Activated CD4-positive, alpha-beta memory T cell treated with anti-CD3 and anti-CD28 coated beads for 36 hours (primary cell): ENCODE measurements at regions of chr4 and their contacts with region 1.

Region 1: DNA sequence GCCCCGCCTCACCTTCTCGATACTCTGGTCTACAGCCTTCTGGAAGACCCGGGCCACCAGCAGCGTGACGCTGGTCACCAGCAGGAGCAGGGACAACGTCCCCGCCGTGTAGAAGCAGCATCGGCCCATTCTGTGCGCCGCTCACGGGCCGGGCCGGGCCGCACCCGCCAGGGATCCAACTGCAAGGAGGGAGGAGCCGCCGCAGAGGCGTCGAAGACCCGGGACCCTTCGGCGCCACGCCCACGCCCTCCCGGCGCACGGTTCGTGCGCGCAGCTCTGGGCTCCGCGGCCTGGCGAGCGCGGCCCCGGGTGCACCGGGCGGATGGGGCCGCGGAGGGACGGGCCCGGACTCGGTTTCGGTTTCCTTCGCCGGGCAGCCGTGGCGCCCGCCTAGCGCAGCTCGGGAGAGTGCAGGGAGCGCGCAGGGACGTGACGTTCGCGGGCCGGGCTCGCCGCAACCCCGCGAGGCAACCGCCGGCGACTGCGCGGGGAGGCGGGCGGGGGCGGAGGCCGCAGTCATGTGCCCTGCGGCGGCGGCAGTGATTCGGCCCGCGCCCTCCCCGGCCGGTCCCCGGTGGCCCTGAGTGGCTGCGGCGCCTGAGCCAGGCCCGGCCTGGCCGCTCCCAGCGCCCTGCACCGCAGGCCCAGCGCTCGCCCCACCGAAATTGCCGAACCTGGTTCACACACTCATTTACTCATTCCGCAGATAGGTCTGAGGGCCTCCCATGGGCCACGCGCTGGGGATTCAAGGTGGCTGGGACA is at the start of gene SCARB2:
- DNase-seq: peak; percentile 75
- H3K4me3 Mint-ChIP-seq: peak within 1 kb of the TSS; percentile 70
- H3K27ac Mint-ChIP-seq: peak within 1 kb of the TSS; percentile 44
- H3K4me1 Mint-ChIP-seq: peaks cover 25% of the 10 kb centered on the region
- H3K27me3 Mint-ChIP-seq: no peaks in the 10 kb centered on the region
- total RNA-seq, gene SCARB2: 7.0 to 8.2 TPM

Region 2: GRCh38 chr4:76198411-76199237 is 15.0 kb before region 1 on chr4:
- CTCF ChIA-PET with region 1: no interaction called
- POLR2A ChIA-PET with region 1: no interaction called
- intact Hi-C with region 1: loop called (anchors 1 kb)
- DNase-seq: peak; percentile 73
- H3K4me3 Mint-ChIP-seq: no peak overlapping the region
- H3K27ac Mint-ChIP-seq: peak overlapping the region; percentile 20
- H3K4me1 Mint-ChIP-seq: peaks cover 44% of the 10 kb centered on the region
- H3K27me3 Mint-ChIP-seq: no peaks in the 10 kb centered on the region